Activated T-helper 1 cell treated with anti-CD3 and anti-CD28 coated beads, Interleukin-12 subunit alpha, Interleukin-12 subunit beta, Interleukin-2, Interleukin-4 antibody, amounts not matched to agents 30 ng/mL and 10 ng/mL and 1 ng/mL, durations not matched to agents 14 hours and 24 hours and 36 hours (primary cell): ENCODE measurements at regions of chr9 and their contacts with region 1.

Region 1: DNA sequence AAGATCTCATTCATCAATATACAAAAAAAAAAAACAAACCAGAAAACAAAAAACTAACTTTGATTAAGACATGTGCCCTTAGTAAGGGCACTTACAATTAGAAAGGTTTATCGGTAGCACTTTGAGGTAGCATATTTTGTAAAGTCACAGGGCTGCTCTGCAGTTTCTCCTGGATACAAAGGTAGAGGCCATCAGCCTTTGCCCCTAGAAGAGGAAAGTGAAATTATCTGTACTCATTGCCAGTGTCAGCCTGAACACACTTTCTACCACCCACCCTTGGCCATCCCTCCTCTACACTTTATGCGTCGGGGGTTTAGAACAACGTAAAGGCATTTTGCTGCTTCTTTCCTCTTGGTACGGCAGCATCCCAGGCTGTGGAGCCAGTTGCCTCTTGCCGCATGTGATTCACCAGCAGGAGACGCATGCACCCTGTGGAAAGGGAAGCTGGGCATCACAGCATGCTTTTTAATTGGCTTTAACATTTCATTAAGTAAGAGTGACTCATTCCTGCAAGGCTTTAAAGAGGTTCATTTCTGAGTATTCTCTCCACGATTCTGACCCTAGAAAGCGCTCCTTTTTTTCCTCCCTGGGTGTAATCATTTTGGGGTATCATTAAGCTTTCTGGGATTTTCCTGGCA is 84.6 kb downstream of the CEMIP2 start:
- DNase-seq: no peak
- H3K4me3 Mint-ChIP-seq: peak overlapping the region; percentile 72
- H3K27ac Mint-ChIP-seq: peak overlapping the region; percentile 68
- H3K4me1 Mint-ChIP-seq: peaks cover 60% of the 10 kb centered on the region
- H3K27me3 Mint-ChIP-seq: no peaks in the 10 kb centered on the region

Region 2: GRCh38 chr9:71721855-71722254 is 38.1 kb after region 1 on chr9:
- intact Hi-C with region 1: loop called (anchors 5 kb)
- DNase-seq: no peak
- H3K4me3 Mint-ChIP-seq: no peak overlapping the region
- H3K27ac Mint-ChIP-seq: no peak overlapping the region
- H3K4me1 Mint-ChIP-seq: peaks cover 15% of the 10 kb centered on the region
- H3K27me3 Mint-ChIP-seq: no peaks in the 10 kb centered on the region